Activated naive CD4-positive, alpha-beta T cell treated with anti-CD3 and anti-CD28 coated beads for 36 hours (primary cell): ENCODE measurements at regions of chr3 and their contacts with region 1.

Region 1: GRCh38 chr3:123328851-123329635 is 119.8 kb downstream of the ADCY5 start:
- DNase-seq: peak; percentile 80
- H3K4me3 Mint-ChIP-seq: no peak overlapping the region
- H3K27ac Mint-ChIP-seq: no peak overlapping the region
- H3K4me1 Mint-ChIP-seq: no peaks in the 10 kb centered on the region
- H3K27me3 Mint-ChIP-seq: no peaks in the 10 kb centered on the region

Region 2: DNA sequence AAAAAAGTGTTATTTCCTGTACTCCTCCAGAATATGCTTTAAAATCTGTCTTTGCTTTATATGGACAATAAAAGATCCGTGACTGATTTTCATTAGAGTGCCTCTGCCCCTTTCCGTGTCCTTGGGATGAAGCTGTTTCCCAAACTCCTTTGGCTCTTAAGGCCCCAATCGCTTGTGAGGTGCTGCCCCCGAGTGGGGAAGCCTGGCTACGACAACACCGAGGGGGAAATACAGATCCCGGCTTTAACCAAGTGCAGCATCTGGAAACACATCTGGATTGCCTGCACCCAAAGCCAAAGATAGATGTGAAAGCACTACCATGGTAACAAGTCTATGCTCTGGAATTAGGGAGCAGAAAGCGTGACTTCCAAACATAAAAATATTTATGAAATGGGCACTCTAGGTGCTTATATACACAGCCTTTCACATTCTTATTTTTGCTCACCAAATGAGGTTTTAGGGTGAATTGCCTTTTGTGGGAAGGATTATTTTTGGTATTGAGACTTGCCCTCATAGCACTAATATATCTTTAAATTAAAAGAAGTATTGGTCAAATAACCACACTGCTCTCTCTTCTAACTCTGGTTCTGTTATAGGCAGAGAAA is 160.5 kb after region 1 on chr3:
- CTCF ChIA-PET with region 1: interaction called, 5 read pairs
- intact Hi-C with region 1: loop called (anchors 1 kb)
- DNase-seq: peak; percentile 70
- H3K4me3 Mint-ChIP-seq: no peak overlapping the region
- H3K27ac Mint-ChIP-seq: no peak overlapping the region
- H3K4me1 Mint-ChIP-seq: no peaks in the 10 kb centered on the region
- H3K27me3 Mint-ChIP-seq: no peaks in the 10 kb centered on the region

Region 3: DNA sequence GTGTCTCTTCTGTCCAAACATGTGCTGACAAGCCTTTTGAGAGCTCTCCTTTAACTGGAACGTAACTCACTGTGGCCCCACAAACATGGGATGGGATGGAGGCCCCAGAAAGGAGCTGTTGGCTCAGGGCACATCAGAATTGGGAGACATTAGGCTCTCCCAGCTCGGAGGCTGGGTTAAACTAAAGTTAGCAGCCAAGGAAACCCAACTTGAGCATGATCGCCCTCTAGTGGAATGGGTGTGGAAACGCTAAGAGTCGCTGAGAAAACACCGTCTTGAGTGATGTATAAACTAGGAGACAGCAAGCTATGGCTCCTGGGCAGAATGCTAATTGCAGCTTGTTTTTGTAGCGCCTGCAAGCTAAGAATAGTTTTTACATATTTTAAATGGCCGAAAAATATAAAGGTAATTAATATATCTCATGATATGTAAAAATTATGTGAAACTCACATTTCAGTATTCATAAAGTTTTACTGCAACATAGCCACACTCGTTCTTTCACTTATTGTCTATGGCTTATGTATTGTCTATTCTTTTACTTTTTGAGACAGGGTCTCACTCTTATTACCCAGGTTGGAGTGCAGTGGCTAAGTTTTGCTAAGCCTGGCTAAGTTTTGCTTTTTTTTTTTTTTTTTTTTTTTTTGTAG is 394.6 kb after region 1 on chr3:
- CTCF ChIA-PET with region 1: no interaction called
- intact Hi-C with region 1: loop called (anchors 2 kb)
- DNase-seq: peak; percentile 71
- H3K4me3 Mint-ChIP-seq: no peak overlapping the region
- H3K27ac Mint-ChIP-seq: no peak overlapping the region
- H3K4me1 Mint-ChIP-seq: no peaks in the 10 kb centered on the region
- H3K27me3 Mint-ChIP-seq: peaks cover 15% of the 10 kb centered on the region